ENCODE measurements at regions of chr1 and their contacts with region 1.

Region 1: GRCh38 chr1:52920791-52921291 is 699 bp downstream of the ECHDC2 start:
- DNase-seq: peak in 4 of 35 experiments; percentile 5 to 23 (median 8)
- ATAC-seq: peak in 1 of 4 experiments; percentile 1
- H3K4me3 ChIP-seq: peak overlapping the region; percentile 55 to 82
- H3K4me3 Mint-ChIP-seq: peak overlapping the region; percentile 79 to 86 (median 82)
- H3K27ac ChIP-seq: peak overlapping the region; percentile 62
- H3K27ac Mint-ChIP-seq: peak overlapping the region; percentile 57 to 65
- H3K4me1 ChIP-seq: peaks cover 0 to 24% of the 10 kb centered on the region in 2 experiments
- H3K4me1 Mint-ChIP-seq: peaks cover 26 to 34% (median 31%) of the 10 kb centered on the region in 3 donors
- H3K27me3 ChIP-seq: no peaks in the 10 kb centered on the region
- H3K27me3 Mint-ChIP-seq: no peaks in the 10 kb centered on the region

Region 2: DNA sequence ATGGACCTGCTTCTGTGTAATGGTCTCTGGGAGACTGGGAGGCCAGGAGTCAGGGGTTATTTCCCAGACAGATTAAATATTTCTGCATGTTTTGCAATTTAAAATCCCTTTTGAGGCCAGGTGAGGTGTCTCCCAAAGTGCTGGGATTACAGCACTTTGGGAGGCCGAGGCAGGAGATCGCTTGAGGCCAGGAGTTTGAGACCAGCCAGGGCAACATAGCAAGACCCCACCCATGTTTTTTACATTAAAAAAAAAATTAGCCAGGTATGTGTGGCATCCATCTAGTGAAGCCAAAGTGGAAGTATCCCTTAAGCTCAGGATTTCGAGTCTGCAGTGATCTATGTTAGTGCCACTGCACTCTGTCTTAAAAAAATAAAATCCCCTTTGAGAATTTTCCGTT is 33.4 kb before region 1 on chr1:
- CTCF ChIA-PET with region 1: no interaction called
- POLR2A ChIA-PET with region 1: no interaction called
- DNase-seq: no peak
- ATAC-seq: no peak
- H3K4me3 ChIP-seq: no peak overlapping the region
- H3K4me3 Mint-ChIP-seq: no peak overlapping the region
- H3K27ac ChIP-seq: no peak overlapping the region
- H3K27ac Mint-ChIP-seq: no peak overlapping the region
- H3K4me1 ChIP-seq: no peaks in the 10 kb centered on the region
- H3K4me1 Mint-ChIP-seq: no peaks in the 10 kb centered on the region
- H3K27me3 ChIP-seq: no peaks in the 10 kb centered on the region
- H3K27me3 Mint-ChIP-seq: no peaks in the 10 kb centered on the region

Region 3: GRCh38 chr1:52947490-52947889 is 26.6 kb after region 1 on chr1:
- CTCF ChIA-PET with region 1: interaction called in 1 of 2 experiments, 6 read pairs
- POLR2A ChIA-PET with region 1: interaction called in 1 of 2 experiments, 17 read pairs
- DNase-seq: no peak
- ATAC-seq: no peak
- H3K4me3 ChIP-seq: no peak overlapping the region
- H3K4me3 Mint-ChIP-seq: no peak overlapping the region
- H3K27ac ChIP-seq: no peak overlapping the region
- H3K27ac Mint-ChIP-seq: no peak overlapping the region
- H3K4me1 ChIP-seq: no peaks in the 10 kb centered on the region
- H3K4me1 Mint-ChIP-seq: no peaks in the 10 kb centered on the region
- H3K27me3 ChIP-seq: no peaks in the 10 kb centered on the region
- H3K27me3 Mint-ChIP-seq: no peaks in the 10 kb centered on the region

Region 4: DNA sequence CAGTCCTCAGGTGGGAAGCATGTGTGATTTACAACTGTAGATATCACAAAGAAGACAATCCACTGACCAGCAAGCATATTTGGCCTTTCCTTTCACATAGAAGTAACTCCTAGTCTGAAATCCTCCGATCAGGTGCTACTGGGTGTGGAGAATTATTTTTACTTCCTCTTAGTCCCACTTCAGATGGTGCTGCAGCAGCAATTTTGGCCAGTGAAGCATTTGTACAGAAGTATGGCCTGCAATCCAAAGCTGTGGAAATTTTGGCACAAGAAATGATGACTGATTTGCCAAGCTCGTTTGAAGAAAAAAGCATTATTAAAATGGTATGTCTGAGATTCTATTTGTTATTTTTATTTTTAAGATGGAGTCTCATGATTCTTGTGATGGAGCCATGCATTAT is 57.2 kb after region 1 on chr1:
- CTCF ChIA-PET with region 1: no interaction called
- POLR2A ChIA-PET with region 1: no interaction called
- DNase-seq: no peak
- ATAC-seq: no peak
- H3K4me3 ChIP-seq: no peak overlapping the region
- H3K4me3 Mint-ChIP-seq: no peak overlapping the region
- H3K27ac ChIP-seq: no peak overlapping the region
- H3K27ac Mint-ChIP-seq: no peak overlapping the region
- H3K4me1 ChIP-seq: no peaks in the 10 kb centered on the region
- H3K4me1 Mint-ChIP-seq: peaks cover 0 to 4% (median 2%) of the 10 kb centered on the region in 3 donors
- H3K27me3 ChIP-seq: no peaks in the 10 kb centered on the region
- H3K27me3 Mint-ChIP-seq: no peaks in the 10 kb centered on the region

Region 5: GRCh38 chr1:53014791-53015507 is 94.1 kb after region 1 on chr1:
- CTCF ChIA-PET with region 1: interaction called in 1 of 2 experiments, 13 read pairs
- POLR2A ChIA-PET with region 1: no interaction called
- DNase-seq: peak; percentile 52 to 91 (median 79)
- ATAC-seq: peak; percentile 98 to 100 (median 100)
- H3K4me3 ChIP-seq: peak overlapping the region; percentile 28 to 53
- H3K4me3 Mint-ChIP-seq: peak overlapping the region; percentile 81 to 90 (median 86)
- H3K27ac ChIP-seq: peak overlapping the region; percentile 32
- H3K27ac Mint-ChIP-seq: peak overlapping the region; percentile 68 to 76
- H3K4me1 ChIP-seq: peaks cover 4 to 11% of the 10 kb centered on the region in 2 experiments
- H3K4me1 Mint-ChIP-seq: peaks cover 24 to 38% (median 36%) of the 10 kb centered on the region in 3 donors
- H3K27me3 ChIP-seq: no peaks in the 10 kb centered on the region
- H3K27me3 Mint-ChIP-seq: no peaks in the 10 kb centered on the region

Measured in T-cell (primary cell).